Right cardiac atrium (tissue), 5 donors: ENCODE measurements at regions of chr6 and their contacts with region 1.

Region 1: GRCh38 chr6:154733012-154733625 is at the start of gene SCAF8:
- DNase-seq: peak; percentile 82 to 94 (median 93)
- ATAC-seq: peak; percentile 86 to 90
- H3K4me3 ChIP-seq: peak within 1 kb of the TSS; percentile 86
- H3K27ac ChIP-seq: peak within 1 kb of the TSS; percentile 99
- H3K4me1 ChIP-seq: peaks cover 10% of the 10 kb centered on the region
- H3K27me3 ChIP-seq: no peaks in the 10 kb centered on the region
- total RNA-seq, gene SCAF8: 40.4 to 46.4 (median 44.3) TPM

Region 2: GRCh38 chr6:154649721-154650120 is 83.4 kb before region 1 on chr6:
- intact Hi-C with region 1: no loop called
- DNase-seq: no peak
- ATAC-seq: peak; percentile 63 to 72
- H3K4me3 ChIP-seq: no peak overlapping the region
- H3K27ac ChIP-seq: no peak overlapping the region
- H3K4me1 ChIP-seq: peaks cover 4% of the 10 kb centered on the region
- H3K27me3 ChIP-seq: no peaks in the 10 kb centered on the region

Region 3: DNA sequence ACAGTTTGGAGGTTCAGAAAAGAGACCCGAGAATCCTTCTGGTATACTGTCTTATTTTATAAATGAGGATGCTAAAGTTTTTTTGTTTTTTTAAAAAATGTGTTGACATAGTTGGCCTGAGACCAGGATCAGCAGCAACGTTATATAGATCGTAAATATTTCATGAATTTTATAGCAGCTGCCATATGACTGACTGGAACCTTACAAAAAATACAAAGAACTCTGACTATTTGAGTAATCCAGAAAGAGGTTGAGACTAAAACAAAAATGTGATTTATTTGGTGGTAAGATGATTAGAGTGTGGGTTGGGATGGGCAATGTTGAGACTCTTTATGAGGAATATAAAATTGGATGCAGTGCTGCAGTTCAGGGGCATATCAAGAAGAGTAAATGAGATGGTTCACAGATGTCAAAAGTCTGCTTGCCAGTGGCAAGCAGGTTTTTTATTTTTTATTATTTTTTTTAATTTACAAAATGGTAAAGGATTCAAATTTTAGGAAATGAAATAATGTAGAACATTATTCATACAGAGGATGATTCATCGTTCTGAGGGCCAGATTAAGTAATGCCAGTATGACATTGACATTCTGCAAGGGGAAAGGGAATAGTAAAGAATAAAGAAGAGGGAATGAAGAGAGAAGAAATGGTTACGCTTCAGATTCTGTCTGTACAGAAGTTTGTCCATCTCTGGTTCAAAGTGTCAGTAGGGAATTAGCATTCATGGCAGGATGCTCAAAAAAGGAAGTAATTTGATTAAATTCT is 58.6 kb after region 1 on chr6:
- intact Hi-C with region 1: loop called in 1 of 4 experiments (anchors 10 kb)
- DNase-seq: no peak
- ATAC-seq: no peak
- H3K4me3 ChIP-seq: no peak overlapping the region
- H3K27ac ChIP-seq: no peak overlapping the region
- H3K4me1 ChIP-seq: no peaks in the 10 kb centered on the region
- H3K27me3 ChIP-seq: no peaks in the 10 kb centered on the region